Heart right ventricle (tissue), 16 donors: ENCODE measurements at regions of chr10 and their contacts with region 1.

Region 1: GRCh38 chr10:21953585-21954057 is 49.9 kb downstream of the DNAJC1 start:
- DNase-seq: no peak
- ATAC-seq: peak in 5 of 8 donors; percentile 52 to 72 (median 59)
- H3K4me3 ChIP-seq: no peak overlapping the region
- H3K27ac ChIP-seq: no peak overlapping the region
- H3K4me1 ChIP-seq: peaks cover 0 to 22% (median 13%) of the 10 kb centered on the region in 9 donors
- H3K27me3 ChIP-seq: no peaks in the 10 kb centered on the region
- CTCF ChIP-seq: peak in 8 of 9 donors; percentile 10 to 64 (median 46)

Region 2: DNA sequence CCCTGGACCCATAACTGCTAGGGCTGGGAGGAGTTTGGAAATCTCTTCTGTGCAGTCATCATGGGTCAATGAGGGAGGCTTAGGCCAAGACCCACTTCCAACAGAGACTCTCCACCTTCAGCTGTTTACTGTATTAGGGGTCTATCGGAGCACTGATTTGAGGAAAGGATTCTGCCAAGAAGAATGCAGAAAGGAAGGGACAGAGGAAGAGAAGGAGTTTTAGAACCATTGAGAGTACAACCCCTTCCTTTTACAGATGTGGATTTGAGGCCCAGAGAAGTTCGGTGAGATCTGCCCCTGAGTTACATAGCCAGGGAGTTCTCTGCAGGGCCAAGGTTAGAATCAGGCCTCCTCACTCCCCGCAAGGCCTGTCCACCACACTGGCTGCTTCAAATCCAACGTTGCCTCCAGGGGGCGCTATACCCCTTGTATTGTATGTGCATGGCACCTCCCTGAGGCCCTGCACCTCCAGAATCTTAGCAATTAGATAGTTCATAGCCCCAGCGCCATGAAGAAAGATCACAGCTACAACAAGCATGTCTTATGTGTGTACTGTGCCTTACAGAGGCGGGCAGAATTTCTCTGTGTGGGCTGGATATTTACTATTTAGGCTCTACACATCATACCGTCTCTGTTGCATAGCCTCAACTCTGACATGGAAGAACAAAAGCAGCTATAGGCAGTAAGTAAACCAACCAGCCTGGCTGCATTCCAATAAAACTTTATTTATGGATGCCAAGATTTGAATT is 675.0 kb before region 1 on chr10:
- intact Hi-C with region 1: loop called in 6 of 10 experiments (anchors 10 kb)
- DNase-seq: peak; percentile 93 to 96
- ATAC-seq: peak; percentile 92 to 99 (median 98)
- H3K4me3 ChIP-seq: no peak overlapping the region
- H3K27ac ChIP-seq: peak overlapping the region in 2 of 10 donors; percentile 17 to 30
- H3K4me1 ChIP-seq: peaks cover 0 to 9% (median 5%) of the 10 kb centered on the region in 9 donors
- H3K27me3 ChIP-seq: no peaks in the 10 kb centered on the region
- CTCF ChIP-seq: peak; percentile 66 to 89 (median 86)

Region 3: DNA sequence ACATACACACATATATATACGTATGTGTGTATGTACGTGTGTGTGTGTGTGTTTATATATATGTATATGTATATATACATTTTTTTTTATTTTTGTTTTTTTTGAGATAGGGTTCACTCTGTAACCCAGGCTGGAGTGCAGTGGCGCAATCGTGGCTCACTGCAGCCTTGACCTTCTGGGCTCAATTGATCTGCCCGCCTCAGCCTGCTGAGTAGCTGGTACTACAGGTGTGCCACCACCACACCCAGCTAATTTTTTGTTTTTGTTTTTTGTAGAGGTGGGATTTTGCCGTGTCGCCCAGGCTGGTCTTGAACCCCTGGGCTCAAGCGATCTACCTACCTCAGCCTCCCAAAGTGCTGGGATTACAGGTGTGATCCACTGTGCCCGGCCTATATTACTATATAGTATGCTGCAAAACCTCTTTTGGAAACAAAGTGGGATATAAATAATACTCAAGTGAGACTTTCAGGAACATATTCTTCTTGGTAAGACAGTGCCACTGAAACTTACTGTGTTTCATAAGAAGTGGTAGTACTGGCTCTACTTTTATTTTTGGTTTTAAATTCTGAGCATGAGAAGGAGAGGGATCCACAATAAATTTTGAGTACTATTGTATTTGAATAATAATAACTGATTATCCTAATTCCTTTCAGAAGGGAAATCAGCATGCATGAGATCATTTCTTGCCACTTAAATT is 368.6 kb before region 1 on chr10:
- intact Hi-C with region 1: no loop called
- DNase-seq: no peak
- ATAC-seq: no peak
- H3K4me3 ChIP-seq: no peak overlapping the region
- H3K27ac ChIP-seq: no peak overlapping the region
- H3K4me1 ChIP-seq: peaks cover 0 to 16% (median 5%) of the 10 kb centered on the region in 9 donors
- H3K27me3 ChIP-seq: no peaks in the 10 kb centered on the region
- CTCF ChIP-seq: no peak

Region 4: GRCh38 chr10:21993360-21994001 is 39.9 kb after region 1 on chr10:
- intact Hi-C with region 1: no loop called
- DNase-seq: no peak
- ATAC-seq: no peak
- H3K4me3 ChIP-seq: no peak overlapping the region
- H3K27ac ChIP-seq: no peak overlapping the region
- H3K4me1 ChIP-seq: peaks cover 0 to 27% (median 6%) of the 10 kb centered on the region in 9 donors
- H3K27me3 ChIP-seq: no peaks in the 10 kb centered on the region
- CTCF ChIP-seq: peak; percentile 26 to 69 (median 56)